Right ventricle myocardium superior (tissue), 1 donor: ENCODE measurements at regions of chr17 and their contacts with region 1.

Region 1: DNA sequence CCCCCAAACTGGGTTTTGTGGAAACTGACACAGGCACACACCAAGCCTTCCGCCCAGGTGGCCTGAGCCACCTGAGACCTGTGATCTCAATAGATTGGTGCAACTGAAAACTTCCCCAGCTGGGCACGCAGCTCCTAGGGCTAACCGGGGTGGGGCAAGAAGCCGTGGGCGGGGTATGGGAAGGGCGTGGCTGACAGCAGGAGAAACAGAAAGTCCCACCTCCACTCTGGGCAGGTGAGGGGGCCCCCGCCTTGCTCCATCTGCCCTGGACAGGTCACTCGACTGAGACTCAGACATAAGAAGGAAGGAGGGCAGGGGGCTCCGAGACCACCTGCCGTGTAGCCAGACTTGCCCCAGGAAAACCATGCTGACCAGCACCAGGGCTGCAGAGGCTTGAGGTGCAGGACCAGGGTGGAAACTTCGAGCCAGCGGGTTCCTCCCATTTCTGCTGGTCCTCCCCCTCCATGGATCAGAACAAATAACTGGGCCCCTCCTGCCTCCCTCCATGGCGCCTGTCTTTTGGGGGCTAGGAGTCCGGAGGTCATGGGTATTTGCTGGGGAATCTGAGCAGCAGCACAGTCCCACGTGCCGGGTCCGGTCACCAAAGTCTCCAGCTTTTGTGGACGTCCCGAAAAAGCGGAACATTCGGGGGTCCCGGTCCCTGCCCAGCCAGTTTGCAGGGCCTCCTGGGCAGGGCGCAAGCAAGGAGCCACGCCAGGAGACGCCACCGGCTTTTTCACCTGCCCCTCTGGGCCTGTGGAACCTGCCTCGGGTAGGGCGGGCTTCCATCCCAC is 1.3 kb downstream of the TIMP2 start:
- DNase-seq: peak; percentile 82
- ATAC-seq: peak; percentile 19

Region 2: GRCh38 chr17:78889531-78889930 is 34.3 kb before region 1 on chr17:
- intact Hi-C with region 1: loop called (anchors 5 kb)
- DNase-seq: no peak
- ATAC-seq: no peak